ENCODE measurements at regions of chr12 and their contacts with region 1.

Region 1: DNA sequence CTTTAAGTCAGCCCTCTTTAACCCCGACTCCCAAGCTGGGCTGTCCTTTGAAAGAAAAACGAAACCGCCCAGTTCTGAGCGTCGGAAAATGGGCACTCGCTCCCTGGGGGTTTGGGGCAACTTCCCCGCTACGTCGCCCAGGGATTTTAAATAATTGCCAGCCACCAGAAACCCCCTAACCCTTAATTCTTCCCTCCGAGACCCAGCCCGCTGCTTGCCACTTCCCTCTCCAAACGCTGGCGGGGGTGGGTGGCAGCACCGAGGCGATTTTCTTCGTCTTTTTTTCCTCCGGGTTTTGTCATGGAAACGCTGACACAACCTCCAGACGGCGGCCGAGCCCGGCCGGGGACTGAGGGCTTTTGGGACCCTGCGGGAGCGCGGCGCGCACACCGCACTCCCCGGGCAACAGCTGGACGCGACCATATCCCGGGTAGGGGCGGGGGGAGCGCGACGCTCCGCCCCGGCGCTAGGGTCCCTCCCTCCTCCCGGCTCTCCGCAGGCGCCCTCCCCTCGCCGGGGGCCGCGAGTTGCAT is at the start of gene CHST11:
- DNase-seq: peak; percentile 92
- H3K4me3 ChIP-seq: peak within 1 kb of the TSS; percentile 79
- H3K27ac ChIP-seq: peak within 1 kb of the TSS; percentile 64
- H3K4me1 ChIP-seq: peaks cover 41% of the 10 kb centered on the region
- CTCF ChIP-seq: peak; percentile 59
- total RNA-seq, gene CHST11: 35.8 and 41.6 TPM in 2 replicates

Region 2: GRCh38 chr12:104329707-104330532 is 126.6 kb before region 1 on chr12:
- CTCF ChIA-PET with region 1: no interaction called
- POLR2A ChIA-PET with region 1: no interaction called
- intact Hi-C with region 1: no loop called
- DNase-seq: no peak
- H3K4me3 ChIP-seq: no peak overlapping the region
- H3K27ac ChIP-seq: no peak overlapping the region
- H3K4me1 ChIP-seq: no peaks in the 10 kb centered on the region
- CTCF ChIP-seq: no peak

Region 3: DNA sequence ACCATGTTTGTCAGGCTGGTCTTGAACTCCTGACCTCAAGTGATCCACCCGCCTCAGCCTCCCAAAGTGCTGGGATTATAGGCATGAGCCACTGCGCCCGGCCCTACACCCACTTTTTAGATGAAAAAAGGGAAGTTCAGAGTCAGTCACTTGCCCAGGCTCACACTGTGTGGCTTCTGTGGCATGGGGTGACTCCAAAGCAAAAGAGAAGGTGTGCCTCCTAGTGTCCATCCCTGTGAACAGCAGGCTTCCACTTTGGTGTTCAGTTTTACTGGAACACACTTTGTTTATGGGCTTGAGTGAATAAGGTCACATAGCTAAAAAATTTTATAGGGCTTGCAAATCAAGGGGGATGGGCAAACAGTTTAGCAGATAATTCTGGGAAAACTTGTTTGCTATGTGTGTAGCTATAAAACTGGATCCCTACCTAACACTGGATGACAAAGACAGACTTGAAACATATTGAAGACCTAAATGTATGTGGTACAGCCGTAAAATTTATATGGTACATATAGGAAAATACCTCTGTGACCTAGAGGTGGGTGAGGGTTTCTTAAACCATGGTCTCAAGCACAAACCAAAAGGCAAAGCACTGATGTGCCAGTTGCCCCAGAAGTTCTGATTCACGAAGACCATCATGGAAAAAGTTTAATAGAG is 98.0 kb before region 1 on chr12:
- CTCF ChIA-PET with region 1: no interaction called
- POLR2A ChIA-PET with region 1: no interaction called
- intact Hi-C with region 1: no loop called
- DNase-seq: peak; percentile 84
- H3K4me3 ChIP-seq: no peak overlapping the region
- H3K27ac ChIP-seq: no peak overlapping the region
- H3K4me1 ChIP-seq: no peaks in the 10 kb centered on the region
- CTCF ChIP-seq: peak; percentile 88

Region 4: GRCh38 chr12:104420868-104421267 is 35.6 kb before region 1 on chr12:
- CTCF ChIA-PET with region 1: no interaction called
- POLR2A ChIA-PET with region 1: no interaction called
- intact Hi-C with region 1: no loop called
- DNase-seq: no peak
- H3K4me3 ChIP-seq: no peak overlapping the region
- H3K27ac ChIP-seq: no peak overlapping the region
- H3K4me1 ChIP-seq: peaks cover 5% of the 10 kb centered on the region
- CTCF ChIP-seq: no peak

Region 5: DNA sequence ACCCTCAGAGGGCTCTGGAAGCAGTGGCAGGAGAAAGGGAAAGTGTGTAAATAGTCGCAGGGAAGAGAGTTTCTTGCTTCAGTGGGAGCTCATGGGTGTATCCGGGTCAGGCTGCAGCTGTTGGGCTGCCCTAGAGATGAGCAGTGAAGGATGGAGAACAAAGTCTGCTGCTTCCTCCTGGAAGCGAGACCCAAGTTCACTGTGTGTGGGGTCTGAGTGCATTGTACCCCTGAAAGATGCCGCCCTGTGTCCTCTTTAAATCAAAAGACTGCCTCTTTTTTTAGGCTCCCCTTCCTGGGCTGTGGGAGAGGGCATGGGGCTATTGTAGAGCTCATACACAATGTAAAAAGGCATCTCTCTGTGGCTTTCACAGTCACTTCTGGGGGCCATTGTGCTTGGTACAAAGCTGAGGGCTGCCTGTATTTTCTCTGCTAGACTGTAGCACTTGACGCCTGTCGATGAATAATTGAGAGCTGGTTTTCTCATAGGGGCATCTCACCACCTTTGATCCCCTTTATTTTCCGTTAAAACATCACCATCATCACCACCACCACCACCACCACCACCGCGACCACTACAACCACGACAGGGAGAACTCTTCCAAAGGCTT is 17.0 kb after region 1 on chr12:
- CTCF ChIA-PET with region 1: interaction called, 3 read pairs
- POLR2A ChIA-PET with region 1: interaction called, 26 read pairs
- intact Hi-C with region 1: loop called (anchors 2 kb)
- DNase-seq: peak; percentile 80
- H3K4me3 ChIP-seq: peak overlapping the region; percentile 58
- H3K27ac ChIP-seq: peak overlapping the region; percentile 89
- H3K4me1 ChIP-seq: peaks cover 92% of the 10 kb centered on the region
- CTCF ChIP-seq: no peak

Region 6: DNA sequence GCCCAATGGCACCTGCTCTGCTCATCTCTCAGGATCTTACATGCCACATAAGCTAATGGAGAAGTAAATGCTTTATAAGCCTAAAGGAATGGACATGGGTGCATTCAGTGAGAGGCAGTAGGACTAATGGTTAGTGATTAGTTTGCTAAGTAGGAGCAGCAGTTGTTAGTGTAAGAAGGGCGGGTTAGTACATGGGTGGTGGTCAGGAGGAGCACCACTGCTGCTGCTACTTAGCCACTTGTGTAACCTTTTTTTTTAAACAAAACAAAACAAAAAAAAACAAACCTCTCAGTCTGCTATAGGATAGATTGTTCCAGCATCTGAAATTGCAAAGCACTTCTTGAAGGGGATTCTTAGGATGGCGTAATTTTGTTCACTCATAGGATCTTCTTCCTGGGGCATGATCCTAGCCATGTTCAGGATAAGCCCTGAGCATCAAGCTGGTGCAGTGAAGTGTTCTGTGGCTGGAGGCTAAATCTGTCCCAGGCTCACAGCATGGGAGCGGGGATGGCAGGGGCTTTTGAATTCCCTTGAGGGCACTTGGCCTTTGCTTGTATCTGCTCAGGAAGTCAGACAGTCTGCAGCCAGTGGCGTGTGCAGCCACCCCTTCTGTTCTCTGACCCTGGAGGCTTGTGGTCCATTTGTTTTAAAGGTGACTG is 63.9 kb after region 1 on chr12:
- CTCF ChIA-PET with region 1: no interaction called
- POLR2A ChIA-PET with region 1: no interaction called
- intact Hi-C with region 1: loop called (anchors 2 kb)
- DNase-seq: peak; percentile 79
- H3K4me3 ChIP-seq: peak overlapping the region; percentile 48
- H3K27ac ChIP-seq: peak overlapping the region; percentile 68
- H3K4me1 ChIP-seq: peaks cover 82% of the 10 kb centered on the region
- CTCF ChIP-seq: no peak

Region 7: GRCh38 chr12:104582739-104583138 is 126.3 kb after region 1 on chr12:
- CTCF ChIA-PET with region 1: no interaction called
- POLR2A ChIA-PET with region 1: interaction called, 6 read pairs
- intact Hi-C with region 1: loop called (anchors 2 kb)
- DNase-seq: peak; percentile 96
- H3K4me3 ChIP-seq: peak overlapping the region; percentile 59
- H3K27ac ChIP-seq: peak overlapping the region; percentile 100
- H3K4me1 ChIP-seq: peaks cover 95% of the 10 kb centered on the region
- CTCF ChIP-seq: no peak

Region 8: GRCh38 chr12:104669736-104670341 is 213.4 kb after region 1 on chr12:
- CTCF ChIA-PET with region 1: no interaction called
- POLR2A ChIA-PET with region 1: no interaction called
- intact Hi-C with region 1: loop called (anchors 5 kb)
- DNase-seq: peak; percentile 54
- H3K4me3 ChIP-seq: no peak overlapping the region
- H3K27ac ChIP-seq: no peak overlapping the region
- H3K4me1 ChIP-seq: peaks cover 34% of the 10 kb centered on the region
- CTCF ChIP-seq: no peak

Region 9: GRCh38 chr12:104750061-104750460 is 293.6 kb after region 1 on chr12:
- CTCF ChIA-PET with region 1: no interaction called
- POLR2A ChIA-PET with region 1: no interaction called
- intact Hi-C with region 1: loop called (anchors 5 kb)
- DNase-seq: peak; percentile 56
- H3K4me3 ChIP-seq: no peak overlapping the region
- H3K27ac ChIP-seq: no peak overlapping the region
- H3K4me1 ChIP-seq: peaks cover 47% of the 10 kb centered on the region
- CTCF ChIP-seq: no peak

Region 10: DNA sequence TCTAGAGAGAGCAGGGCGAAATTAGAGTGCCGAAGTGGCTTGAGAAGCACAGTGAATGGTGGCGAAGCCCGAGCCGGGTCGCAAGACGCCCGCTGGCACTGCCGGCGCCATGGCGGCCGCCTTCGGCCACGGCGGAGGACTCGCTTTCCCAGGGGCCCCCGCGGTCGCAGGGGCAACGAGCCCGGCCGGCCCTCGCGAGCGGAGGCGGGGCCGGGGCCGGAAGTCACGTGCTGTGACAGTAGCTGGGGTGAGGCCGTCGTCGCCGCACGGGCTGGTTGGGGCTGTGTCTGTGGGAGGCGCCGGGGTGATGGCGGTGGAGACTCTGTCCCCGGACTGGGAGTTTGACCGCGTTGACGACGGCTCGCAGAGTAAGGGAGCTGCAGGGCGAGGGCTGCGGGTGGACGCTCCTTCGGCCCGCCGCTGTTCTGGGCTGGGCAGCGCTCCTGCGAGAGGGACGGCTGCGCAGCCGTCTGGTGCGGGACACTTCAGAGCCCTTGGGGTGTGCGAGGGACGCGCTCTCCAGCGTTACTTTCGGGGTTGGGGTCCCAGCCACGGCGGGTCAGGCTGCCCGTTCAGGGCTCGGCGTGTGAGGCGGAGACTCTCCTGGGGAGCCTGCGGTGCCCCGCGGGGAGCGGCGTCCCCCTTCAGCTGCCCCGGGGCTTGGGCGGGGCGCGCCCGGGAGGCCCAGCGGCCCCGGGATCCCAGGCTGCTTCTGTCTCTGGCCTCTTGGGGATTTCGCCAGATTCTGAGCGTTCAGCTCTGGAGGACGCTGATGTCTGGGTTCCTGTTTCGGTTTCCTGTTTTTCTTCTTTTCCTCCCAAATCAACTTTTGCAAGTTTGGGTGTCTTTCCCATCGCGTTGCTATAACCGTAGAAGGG is 651.2 kb after region 1 on chr12 and contains the start of gene WASHC4:
- CTCF ChIA-PET with region 1: no interaction called
- POLR2A ChIA-PET with region 1: no interaction called
- intact Hi-C with region 1: loop called (anchors 5 kb)
- DNase-seq: peak; percentile 95
- H3K4me3 ChIP-seq: peak within 1 kb of the TSS; percentile 99
- H3K27ac ChIP-seq: peak within 1 kb of the TSS; percentile 96
- H3K4me1 ChIP-seq: peaks cover 36% of the 10 kb centered on the region
- CTCF ChIP-seq: no peak
- total RNA-seq, gene WASHC4: 54.8 and 63.6 TPM in 2 replicates